WTC11 (cell line): ENCODE measurements at regions of chr12 and their contacts with region 1.

Region 1: DNA sequence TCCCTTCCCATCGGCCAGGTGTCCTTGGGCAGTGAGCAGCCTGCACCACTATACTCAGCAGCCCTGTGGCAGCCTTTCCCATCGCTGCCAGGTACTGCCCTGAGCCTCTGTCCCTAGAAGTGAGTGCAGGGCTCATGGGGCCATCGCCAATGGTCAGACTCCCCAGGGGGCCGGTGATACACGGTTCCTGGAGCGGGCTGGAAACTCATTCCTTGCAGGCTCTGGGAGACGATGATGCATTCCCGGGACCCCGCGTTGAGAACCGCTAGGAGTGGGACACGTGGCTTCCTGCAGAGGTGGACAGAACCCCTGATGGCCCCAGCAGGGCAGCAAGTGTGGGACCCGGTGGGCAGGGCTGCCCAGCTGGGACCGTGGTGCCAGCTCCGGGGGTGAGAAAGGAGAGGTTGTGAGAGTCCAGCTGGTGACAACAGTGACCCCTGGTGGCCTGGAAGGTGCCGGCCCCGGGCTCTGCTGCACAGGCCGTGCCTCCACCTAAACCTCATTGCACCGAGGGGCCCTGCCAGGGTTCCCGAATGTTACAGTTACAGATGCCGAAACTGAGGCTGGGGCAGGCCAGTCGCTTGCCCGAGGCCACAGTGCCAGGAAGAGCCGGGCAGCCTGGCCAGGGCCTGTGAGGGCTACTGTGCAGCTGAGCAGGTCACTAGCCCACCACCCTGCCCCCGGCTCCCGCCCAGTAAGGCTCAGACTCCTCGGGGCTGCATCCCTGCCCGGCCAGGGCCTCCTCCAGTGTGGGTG is 33.8 kb downstream of the FBRSL1 start:
- DNase-seq: peak; percentile 86
- ATAC-seq: peak; percentile 80
- H3K4me3 Mint-ChIP-seq: no peak overlapping the region
- H3K27ac Mint-ChIP-seq: no peak overlapping the region
- H3K4me1 Mint-ChIP-seq: peaks cover 5% of the 10 kb centered on the region
- H3K27me3 Mint-ChIP-seq: peaks cover 29% of the 10 kb centered on the region
- CTCF ChIP-seq: peak; percentile 80

Region 2: DNA sequence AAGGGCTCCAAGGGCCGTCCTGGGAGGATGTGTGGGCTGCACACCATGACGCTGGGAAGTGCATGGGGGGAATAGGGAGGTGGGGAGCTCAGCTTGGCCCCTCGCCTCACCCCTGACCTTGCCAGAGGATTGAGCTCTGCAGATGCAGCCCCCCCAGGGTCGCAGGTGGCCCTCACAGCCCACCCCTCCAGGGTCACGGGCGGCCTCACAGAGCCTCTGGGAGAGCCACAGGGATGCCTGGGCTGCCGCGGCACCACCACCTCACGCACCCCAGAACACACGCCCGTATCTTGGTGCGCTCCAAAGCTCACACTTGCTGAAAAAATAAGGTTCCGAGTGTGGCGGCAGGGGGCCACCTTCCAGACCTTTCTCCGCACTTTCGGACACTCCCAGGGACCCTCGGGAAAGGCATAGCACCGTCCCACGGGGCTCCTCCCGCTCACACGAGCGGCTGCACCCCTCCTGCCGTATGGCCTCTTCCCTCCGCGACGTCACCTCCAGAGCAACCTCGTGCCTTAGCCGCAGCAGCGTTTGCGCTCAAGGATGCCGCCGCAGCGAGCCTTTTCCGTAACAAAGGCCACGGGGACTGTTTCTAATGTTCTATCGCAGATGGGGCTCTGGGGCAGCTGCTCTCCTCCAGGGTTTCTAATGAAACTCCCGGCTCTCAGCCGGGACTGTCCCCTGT is 43.7 kb before region 1 on chr12:
- CTCF ChIA-PET with region 1: no interaction called
- POLR2A ChIA-PET with region 1: no interaction called
- DNase-seq: no peak
- ATAC-seq: no peak
- H3K4me3 Mint-ChIP-seq: no peak overlapping the region
- H3K27ac Mint-ChIP-seq: no peak overlapping the region
- H3K4me1 Mint-ChIP-seq: no peaks in the 10 kb centered on the region
- H3K27me3 Mint-ChIP-seq: peaks cover 80% of the 10 kb centered on the region
- CTCF ChIP-seq: no peak

Region 3: DNA sequence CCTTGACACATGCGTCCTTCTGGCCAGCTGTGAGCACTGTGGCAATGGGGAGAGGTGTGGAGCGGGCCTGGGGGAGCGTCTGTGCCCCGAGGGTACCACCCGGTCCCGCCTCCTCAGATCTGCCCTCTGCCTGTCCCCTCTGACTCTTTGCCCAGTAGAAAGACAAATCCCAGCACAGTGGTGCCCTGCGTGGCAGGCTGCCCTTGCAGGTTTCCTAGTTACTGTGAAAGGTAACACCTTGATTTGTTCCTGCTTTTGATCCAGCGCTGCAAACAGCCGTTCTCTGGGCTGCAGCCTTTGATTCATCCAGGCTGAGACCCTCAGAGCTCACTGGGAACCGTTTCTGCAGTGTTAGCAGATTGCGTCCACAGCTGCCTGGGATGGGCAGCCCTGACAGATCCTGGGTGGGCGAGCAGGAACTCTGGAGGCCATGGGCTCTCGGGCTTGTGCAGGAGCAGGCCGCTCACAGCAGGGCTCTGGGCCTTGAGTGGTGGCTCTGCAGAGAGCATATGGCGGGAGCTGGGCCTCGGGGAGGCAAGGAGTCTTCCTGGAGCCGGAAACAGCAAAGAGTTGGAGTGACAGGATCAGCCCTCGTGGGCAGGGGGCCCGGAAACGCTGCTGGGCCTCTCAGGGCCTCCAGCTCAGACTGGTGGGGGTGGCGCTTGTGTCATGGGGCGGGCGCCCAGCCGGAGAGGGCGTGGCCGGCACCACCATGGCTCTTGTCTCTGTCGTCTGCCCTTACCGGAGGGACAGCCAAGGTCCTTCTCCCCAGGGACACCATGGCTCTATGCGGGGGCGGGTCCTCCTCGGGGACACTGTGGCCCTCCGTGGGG is 17.2 kb before region 1 on chr12:
- CTCF ChIA-PET with region 1: interaction called, 21 read pairs
- POLR2A ChIA-PET with region 1: interaction called, 3 read pairs
- DNase-seq: no peak
- ATAC-seq: no peak
- H3K4me3 Mint-ChIP-seq: no peak overlapping the region
- H3K27ac Mint-ChIP-seq: peak overlapping the region; percentile 34; the same call in 1 of the 2 replicates
- H3K4me1 Mint-ChIP-seq: peaks cover 24% of the 10 kb centered on the region
- H3K27me3 Mint-ChIP-seq: no peaks in the 10 kb centered on the region
- CTCF ChIP-seq: no peak

Region 4: GRCh38 chr12:132513070-132513398 is 10.7 kb before region 1 on chr12:
- CTCF ChIA-PET with region 1: interaction called, 10 read pairs
- POLR2A ChIA-PET with region 1: interaction called, 3 read pairs
- DNase-seq: no peak
- ATAC-seq: no peak
- H3K4me3 Mint-ChIP-seq: no peak overlapping the region
- H3K27ac Mint-ChIP-seq: no peak overlapping the region
- H3K4me1 Mint-ChIP-seq: no peaks in the 10 kb centered on the region
- H3K27me3 Mint-ChIP-seq: peaks cover 14% of the 10 kb centered on the region
- CTCF ChIP-seq: no peak